Activated CD4-positive, alpha-beta T cell treated with anti-CD3 and anti-CD28 coated beads for 36 hours (primary cell): ENCODE measurements at regions of chr19 and their contacts with region 1.

Region 1: GRCh38 chr19:38425810-38426466 is at the start of gene RASGRP4:
- DNase-seq: peak; percentile 78
- ATAC-seq: peak; percentile 27
- H3K4me3 Mint-ChIP-seq: peak within 1 kb of the TSS; percentile 60
- H3K27ac Mint-ChIP-seq: peak within 1 kb of the TSS; percentile 90
- H3K4me1 Mint-ChIP-seq: peaks cover 33% of the 10 kb centered on the region
- H3K27me3 Mint-ChIP-seq: no peaks in the 10 kb centered on the region
- total RNA-seq, gene RASGRP4: 5.6 to 5.9 TPM

Region 2: DNA sequence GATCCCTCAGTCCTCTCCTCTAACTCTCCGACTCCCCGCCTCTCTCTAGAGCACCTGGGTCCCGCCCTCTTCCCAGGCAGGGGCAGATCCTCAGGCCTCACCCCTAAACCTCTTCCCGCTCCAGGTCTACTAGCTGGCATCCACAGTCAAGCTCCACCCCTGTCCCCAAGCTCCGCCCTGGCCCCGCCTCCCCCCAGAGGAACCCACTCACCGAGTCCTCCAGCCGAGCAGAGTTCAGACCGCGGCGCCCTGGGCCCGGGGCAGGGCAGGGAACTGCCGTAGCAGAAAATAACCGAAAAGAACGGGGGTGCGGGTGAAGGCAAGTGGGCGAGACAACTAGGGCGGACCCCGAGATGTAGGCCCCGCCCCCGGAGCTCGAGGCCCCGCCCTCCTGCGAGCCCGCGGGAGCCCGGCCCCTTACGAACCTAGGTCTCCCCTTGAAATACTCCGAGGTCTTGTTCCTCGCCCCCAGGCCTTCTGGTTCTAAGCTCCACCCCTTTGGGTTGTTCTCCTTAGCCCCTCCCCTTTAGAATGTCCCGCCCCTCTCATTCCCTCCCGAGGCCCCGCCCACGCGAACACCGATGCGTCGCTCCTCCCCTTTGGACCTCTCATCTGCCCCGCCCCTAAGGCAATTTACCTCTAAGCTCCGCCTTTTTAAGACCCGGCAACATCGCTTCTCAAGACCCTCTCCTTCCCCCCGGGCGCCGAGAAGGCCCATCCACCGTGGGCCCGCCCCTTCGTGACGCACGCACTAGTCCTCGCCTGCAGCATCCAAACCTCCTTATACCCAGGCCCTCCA is 38.2 kb before region 1 on chr19 and contains the start of gene GGN:
- CTCF ChIA-PET with region 1: no interaction called
- POLR2A ChIA-PET with region 1: no interaction called
- intact Hi-C with region 1: no loop called
- DNase-seq: peak; percentile 94
- ATAC-seq: peak; percentile 81
- H3K4me3 Mint-ChIP-seq: peak within 1 kb of the TSS; percentile 75
- H3K27ac Mint-ChIP-seq: peak within 1 kb of the TSS; percentile 76
- H3K4me1 Mint-ChIP-seq: peaks cover 26% of the 10 kb centered on the region
- H3K27me3 Mint-ChIP-seq: peaks cover 14% of the 10 kb centered on the region
- total RNA-seq, gene GGN: 0.30 to 0.51 TPM

Region 3: GRCh38 chr19:38551450-38551813 is 125.5 kb after region 1 on chr19:
- CTCF ChIA-PET with region 1: no interaction called
- POLR2A ChIA-PET with region 1: no interaction called
- intact Hi-C with region 1: loop called (anchors 5 kb)
- DNase-seq: peak; percentile 82
- ATAC-seq: peak; percentile 89
- H3K4me3 Mint-ChIP-seq: no peak overlapping the region
- H3K27ac Mint-ChIP-seq: no peak overlapping the region
- H3K4me1 Mint-ChIP-seq: peaks cover 27% of the 10 kb centered on the region
- H3K27me3 Mint-ChIP-seq: peaks cover 6% of the 10 kb centered on the region

Region 4: GRCh38 chr19:38559428-38560401 is 133.8 kb after region 1 on chr19:
- CTCF ChIA-PET with region 1: no interaction called
- POLR2A ChIA-PET with region 1: interaction called, 3 read pairs
- intact Hi-C with region 1: loop called (anchors 5 kb)
- DNase-seq: peak; percentile 55
- ATAC-seq: peak; percentile 89
- H3K4me3 Mint-ChIP-seq: no peak overlapping the region
- H3K27ac Mint-ChIP-seq: peak overlapping the region; percentile 53
- H3K4me1 Mint-ChIP-seq: peaks cover 33% of the 10 kb centered on the region
- H3K27me3 Mint-ChIP-seq: peaks cover 1% of the 10 kb centered on the region

Region 5: GRCh38 chr19:39397360-39398296 is 971.7 kb after region 1 on chr19:
- CTCF ChIA-PET with region 1: no interaction called
- POLR2A ChIA-PET with region 1: no interaction called
- intact Hi-C with region 1: loop called in 1 of 2 experiments (anchors 5 kb)
- DNase-seq: peak; percentile 97
- ATAC-seq: peak; percentile 58
- H3K4me3 Mint-ChIP-seq: peak overlapping the region; percentile 52
- H3K27ac Mint-ChIP-seq: peak overlapping the region; percentile 97
- H3K4me1 Mint-ChIP-seq: peaks cover 59% of the 10 kb centered on the region
- H3K27me3 Mint-ChIP-seq: no peaks in the 10 kb centered on the region